Transverse colon (tissue), 4 donors: ENCODE measurements at regions of chr15 and their contacts with region 1.

Region 1: DNA sequence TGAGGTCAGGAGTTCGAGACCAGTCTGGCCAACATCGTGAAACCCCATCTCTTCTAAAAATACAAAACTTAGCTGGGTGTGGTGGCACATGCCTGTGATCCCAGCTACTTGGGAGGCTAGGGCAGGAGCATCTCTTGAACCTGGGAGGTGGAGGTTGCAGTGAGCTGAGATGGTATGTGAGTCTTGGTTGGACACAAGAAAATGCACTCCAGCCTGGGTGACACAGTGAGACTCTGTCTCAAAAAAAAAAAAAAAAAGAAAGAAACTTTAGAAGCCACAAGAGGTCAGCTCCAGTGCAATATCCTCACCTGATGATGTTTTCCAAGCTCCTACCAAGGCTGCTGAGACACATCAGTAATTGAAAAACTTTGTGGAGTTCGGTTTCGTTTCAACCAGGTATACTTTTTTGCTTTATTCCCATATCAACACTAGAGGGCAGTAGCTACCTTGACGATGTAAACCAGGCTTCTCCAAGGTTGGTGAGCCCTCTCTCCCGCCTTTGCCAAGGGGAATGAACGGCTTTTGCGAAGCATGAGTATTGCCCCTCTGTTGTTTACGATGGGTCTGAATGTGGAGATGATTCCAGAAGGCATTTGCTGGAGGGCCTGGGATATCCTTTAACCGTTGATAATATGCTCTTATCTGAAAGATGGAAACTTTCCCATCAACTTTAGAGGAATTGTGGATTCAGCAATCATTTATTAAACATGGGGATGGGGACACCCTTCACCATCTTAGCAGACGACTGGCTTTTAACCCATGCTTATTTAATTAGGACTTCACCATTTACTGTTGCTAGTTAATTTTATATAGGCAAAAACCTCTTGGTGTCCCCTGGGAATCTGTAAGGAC is 202.8 kb downstream of the SV2B start:
- DNase-seq: peak; percentile 16
- H3K4me3 ChIP-seq: no peak overlapping the region
- H3K27ac ChIP-seq: no peak overlapping the region
- H3K4me1 ChIP-seq: no peaks in the 10 kb centered on the region
- H3K27me3 ChIP-seq: peaks cover 15% of the 10 kb centered on the region
- CTCF ChIP-seq: peak; percentile 64 to 78 (median 74)
- EP300 ChIP-seq: no peak
- POLR2A ChIP-seq: no peak

Region 2: DNA sequence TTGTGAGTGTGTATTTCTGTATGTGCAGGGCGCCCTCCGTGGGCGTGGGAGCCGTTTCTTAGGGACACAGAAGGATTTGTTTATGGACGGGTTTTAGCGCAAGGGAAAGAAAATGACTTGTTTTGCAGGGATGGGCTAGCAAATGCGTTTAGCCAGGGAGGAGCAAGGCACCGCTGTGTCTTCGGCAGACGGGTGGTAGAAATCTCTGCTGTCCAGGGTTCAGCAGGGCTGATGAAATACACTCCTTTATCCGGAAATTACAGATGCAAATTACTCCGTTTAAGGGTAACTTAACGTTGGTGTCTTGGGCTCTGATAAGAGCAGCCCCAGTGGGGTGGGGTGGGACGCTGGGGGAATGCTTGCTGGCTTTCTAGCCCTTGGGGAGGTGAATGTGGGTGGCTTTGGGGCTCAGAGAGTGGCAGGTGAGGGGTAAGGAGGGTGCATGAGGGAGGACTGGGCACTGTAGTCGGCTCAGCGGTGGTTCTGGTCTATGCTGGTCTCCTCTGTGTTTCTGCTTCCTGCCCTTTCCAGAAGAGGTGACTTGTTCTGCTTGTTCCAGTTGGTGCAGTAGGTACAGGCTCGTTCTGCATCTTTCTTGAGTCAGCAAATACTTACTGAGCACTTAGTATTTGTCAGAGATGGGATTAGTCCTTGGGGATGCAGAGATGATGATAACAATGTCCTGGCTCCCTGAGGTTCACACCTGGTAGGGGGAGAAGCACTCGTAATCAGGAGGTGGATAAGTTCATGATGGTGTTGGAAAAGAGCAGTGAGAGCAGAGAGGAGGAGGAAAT is 201.8 kb before region 1 on chr15:
- in situ Hi-C with region 1: no loop called
- intact Hi-C with region 1: no loop called
- DNase-seq: no peak
- H3K4me3 ChIP-seq: peak overlapping the region in 3 of 4 donors; percentile 18 to 52 (median 33)
- H3K27ac ChIP-seq: no peak overlapping the region
- H3K4me1 ChIP-seq: peaks cover 7 to 18% (median 13%) of the 10 kb centered on the region in 4 donors
- H3K27me3 ChIP-seq: peaks cover 78% of the 10 kb centered on the region
- CTCF ChIP-seq: no peak
- EP300 ChIP-seq: no peak
- POLR2A ChIP-seq: no peak

Region 3: DNA sequence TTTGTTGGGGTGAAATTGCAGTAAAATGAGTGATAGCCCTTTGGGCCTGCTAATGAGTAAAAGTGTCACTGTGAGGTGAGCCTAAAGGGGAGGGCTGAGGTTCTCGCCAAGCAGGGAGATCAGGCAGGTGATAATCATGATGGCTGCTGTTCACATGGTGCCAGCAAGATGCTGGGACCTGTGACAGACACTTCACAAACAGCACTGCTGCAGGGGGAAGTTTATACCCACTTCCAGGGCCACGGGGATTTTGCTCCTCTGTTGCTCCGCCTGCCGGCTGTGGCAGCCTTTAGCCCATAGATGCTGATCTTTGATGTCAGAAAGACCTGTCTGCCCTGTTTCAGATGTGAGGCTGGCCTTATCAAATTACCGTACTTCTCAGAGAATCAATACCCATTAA is 106.0 kb before region 1 on chr15:
- in situ Hi-C with region 1: no loop called
- intact Hi-C with region 1: no loop called
- DNase-seq: no peak
- H3K4me3 ChIP-seq: no peak overlapping the region
- H3K27ac ChIP-seq: no peak overlapping the region
- H3K4me1 ChIP-seq: no peaks in the 10 kb centered on the region
- H3K27me3 ChIP-seq: peaks cover 4% of the 10 kb centered on the region
- CTCF ChIP-seq: no peak
- EP300 ChIP-seq: no peak
- POLR2A ChIP-seq: no peak

Region 4: DNA sequence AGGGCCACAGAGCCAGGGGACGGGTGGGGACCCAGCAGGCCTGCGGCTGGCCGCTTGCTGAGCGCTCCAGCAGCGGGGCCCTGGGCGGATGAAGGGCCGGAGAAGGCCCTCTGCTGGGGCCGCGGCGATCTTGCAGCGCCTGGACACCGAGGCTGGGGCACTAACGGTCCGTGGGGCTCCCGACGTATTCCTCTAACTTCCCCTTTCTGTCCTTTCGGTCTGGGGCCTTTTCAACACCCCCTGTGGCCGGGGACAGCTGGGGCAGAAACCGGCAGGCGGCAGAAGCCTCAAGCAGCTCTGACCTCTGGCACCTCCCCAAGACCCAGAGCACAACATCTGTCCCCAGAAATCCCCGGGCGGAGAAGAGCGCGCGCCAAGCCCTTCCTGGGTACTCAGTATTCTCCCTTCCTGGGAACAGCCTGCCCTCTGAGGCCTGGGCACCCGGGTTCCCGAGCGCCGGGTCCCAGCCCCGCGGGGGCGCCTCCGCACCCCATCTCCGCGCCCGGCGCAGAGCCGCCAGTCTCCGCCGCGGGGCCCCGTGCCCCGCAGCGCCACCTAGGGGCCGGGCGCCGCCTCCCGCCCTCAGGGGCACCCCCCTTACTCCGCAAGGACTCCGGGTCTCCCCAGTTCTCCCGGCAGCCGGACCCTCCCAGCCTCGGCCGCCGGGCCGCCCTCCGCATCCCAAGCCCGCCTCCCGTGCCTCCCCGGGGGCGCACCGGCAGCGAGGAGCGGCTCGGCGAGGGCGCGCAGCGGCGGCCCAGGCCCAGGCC is 550.1 kb after region 1 on chr15:
- in situ Hi-C with region 1: loop called in 3 of 4 experiments (anchors 25 kb)
- intact Hi-C with region 1: loop called (anchors 2 kb)
- DNase-seq: peak; percentile 79
- H3K4me3 ChIP-seq: peak overlapping the region; percentile 41 to 79 (median 72)
- H3K27ac ChIP-seq: peak overlapping the region; percentile 87 to 92 (median 90)
- H3K4me1 ChIP-seq: peaks cover 10 to 44% (median 29%) of the 10 kb centered on the region in 4 donors
- H3K27me3 ChIP-seq: no peaks in the 10 kb centered on the region
- CTCF ChIP-seq: peak; percentile 67 to 75 (median 72)
- EP300 ChIP-seq: no peak
- POLR2A ChIP-seq: peak; percentile 34

Region 5: DNA sequence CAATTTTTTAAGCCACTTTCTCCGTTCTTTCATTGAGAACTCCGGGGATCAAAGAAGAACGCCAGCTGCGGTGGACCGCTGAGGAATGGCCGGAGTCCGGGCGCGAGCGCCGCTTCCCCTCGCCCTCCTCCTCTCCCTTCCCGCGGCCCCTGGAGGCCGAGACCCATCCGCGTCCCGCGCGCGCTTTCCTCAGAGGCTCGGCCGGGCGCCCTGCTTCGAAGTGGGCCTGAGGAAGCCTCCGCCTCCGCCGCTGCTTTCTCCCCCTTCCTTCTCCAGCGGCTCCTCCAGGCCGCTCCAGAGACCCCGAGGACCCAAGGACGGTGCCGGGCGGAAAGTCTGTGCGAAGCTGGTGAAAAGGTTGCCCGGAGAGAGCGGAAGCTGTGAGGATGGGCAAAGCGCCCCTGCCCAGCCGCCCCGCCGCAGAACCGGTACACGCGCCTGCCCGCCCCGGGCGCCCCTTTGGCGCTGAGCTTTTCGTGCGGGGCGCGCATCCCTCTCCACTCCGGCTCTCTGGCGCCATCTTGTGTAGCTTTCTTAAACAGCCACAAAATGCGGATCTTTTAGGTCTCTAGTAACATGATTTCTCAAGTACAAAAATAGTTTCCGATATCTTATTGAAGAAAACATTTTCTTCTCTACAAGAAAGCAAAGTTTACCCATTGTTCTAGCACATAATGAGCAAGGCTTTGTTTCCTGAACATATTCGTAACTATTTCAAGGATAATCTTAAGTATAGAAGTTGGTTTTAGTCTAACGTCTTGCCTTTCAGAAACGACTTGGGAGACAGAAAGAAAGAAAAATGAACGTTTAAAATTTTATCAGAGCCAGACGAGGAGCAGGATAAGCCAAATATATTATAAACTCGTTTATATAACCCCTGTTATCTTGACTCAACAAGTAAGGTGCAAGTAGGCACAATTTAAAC is 1411.9 kb after region 1 on chr15:
- in situ Hi-C with region 1: loop called in 1 of 4 experiments (anchors 25 kb)
- intact Hi-C with region 1: no loop called
- DNase-seq: peak; percentile 65
- H3K4me3 ChIP-seq: peak overlapping the region; percentile 24 to 62 (median 36)
- H3K27ac ChIP-seq: peak overlapping the region; percentile 73 to 82 (median 76)
- H3K4me1 ChIP-seq: peaks cover 0 to 4% (median 2%) of the 10 kb centered on the region in 4 donors
- H3K27me3 ChIP-seq: no peaks in the 10 kb centered on the region
- CTCF ChIP-seq: peak; percentile 81 to 91 (median 83)
- EP300 ChIP-seq: no peak
- POLR2A ChIP-seq: peak; percentile 21